AG04449 (cell line): ENCODE measurements at regions of chr9 and their contacts with region 1.

Region 1: GRCh38 chr9:126558051-126558665 is 55.6 kb upstream of the LMX1B start:
- DNase-seq: no peak
- H3K4me3 ChIP-seq: no peak overlapping the region
- CTCF ChIP-seq: peak; percentile 92

Region 2: GRCh38 chr9:126228781-126229444 is 329.2 kb before region 1 on chr9:
- CTCF ChIA-PET with region 1: no interaction called
- POLR2A ChIA-PET with region 1: no interaction called
- DNase-seq: no peak
- H3K4me3 ChIP-seq: no peak overlapping the region
- CTCF ChIP-seq: peak; percentile 96

Region 3: DNA sequence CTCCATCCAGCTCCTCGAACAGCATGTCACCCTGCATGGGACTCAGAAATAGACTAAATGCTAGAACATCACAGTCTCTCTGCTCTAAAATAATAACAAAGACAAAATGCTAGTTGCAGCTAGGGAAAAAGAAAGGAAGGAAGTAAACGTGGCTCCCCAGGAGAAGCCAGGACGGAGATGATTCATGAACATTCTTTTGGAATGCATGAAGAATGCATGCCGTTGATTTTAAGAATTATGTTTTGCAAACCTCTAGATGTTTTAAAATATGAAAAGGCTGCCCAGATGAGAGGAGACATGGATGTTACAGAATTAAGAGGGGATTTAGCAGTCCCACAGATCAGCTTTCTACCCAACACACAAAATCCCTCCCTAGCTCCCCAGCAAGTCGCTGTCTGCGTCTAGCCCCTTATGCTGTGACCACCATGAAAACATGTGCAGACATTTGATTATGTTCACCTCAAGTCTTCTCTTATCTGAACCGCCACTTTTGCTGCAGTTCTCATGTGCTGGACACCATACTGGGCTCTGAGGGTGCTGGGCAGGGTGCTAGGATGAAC is 83.9 kb before region 1 on chr9:
- CTCF ChIA-PET with region 1: no interaction called
- POLR2A ChIA-PET with region 1: no interaction called
- DNase-seq: peak; percentile 17
- H3K4me3 ChIP-seq: no peak overlapping the region
- CTCF ChIP-seq: no peak

Region 4: GRCh38 chr9:126506361-126506941 is 51.7 kb before region 1 on chr9:
- CTCF ChIA-PET with region 1: interaction called, 269 read pairs
- POLR2A ChIA-PET with region 1: no interaction called
- DNase-seq: no peak
- H3K4me3 ChIP-seq: no peak overlapping the region
- CTCF ChIP-seq: no peak

Region 5: GRCh38 chr9:126532019-126532462 is 26.1 kb before region 1 on chr9:
- CTCF ChIA-PET with region 1: interaction called, 16 read pairs
- POLR2A ChIA-PET with region 1: no interaction called
- DNase-seq: no peak
- H3K4me3 ChIP-seq: no peak overlapping the region
- CTCF ChIP-seq: no peak

Region 6: DNA sequence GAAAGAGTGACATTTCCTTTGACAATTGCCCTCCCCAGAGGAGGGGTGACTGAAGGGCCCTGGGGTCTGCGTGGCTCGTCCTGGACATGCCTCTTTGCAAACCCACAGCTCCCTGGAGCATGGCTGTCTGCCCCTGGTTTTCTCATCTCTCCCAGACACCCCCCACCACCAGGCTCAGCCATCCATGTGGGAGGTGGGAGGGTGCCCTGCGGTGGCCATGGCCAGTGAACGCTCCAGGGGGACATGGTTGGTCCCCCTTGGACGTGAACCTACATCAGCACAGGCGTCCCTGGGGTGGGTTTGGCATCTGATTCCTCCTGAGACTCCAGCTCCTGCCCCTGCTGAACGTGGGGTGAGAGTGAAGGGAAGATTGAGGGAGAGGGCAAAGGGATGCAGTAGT is 12.1 kb before region 1 on chr9:
- CTCF ChIA-PET with region 1: interaction called, 14 read pairs
- POLR2A ChIA-PET with region 1: no interaction called
- DNase-seq: no peak
- H3K4me3 ChIP-seq: no peak overlapping the region
- CTCF ChIP-seq: no peak

Region 7: DNA sequence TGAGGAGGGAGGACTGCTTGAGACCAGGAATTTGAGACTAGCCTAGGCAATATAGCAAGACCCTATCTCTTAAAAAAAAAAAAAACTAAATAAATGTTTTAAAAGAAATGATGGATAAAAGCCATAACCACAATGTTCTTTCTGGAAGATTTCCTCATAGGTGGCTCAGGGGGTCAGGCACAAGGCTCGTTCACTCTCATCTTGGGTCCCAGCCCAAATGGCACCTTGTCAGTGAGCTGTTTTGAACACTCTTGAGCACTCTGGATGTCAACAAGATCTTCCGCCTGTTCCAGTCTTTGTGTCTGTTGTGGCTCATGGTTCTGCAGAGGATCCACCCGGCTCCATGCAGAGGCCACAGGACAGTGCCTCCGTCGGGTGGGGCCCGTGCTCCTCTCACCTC is 19.9 kb after region 1 on chr9:
- CTCF ChIA-PET with region 1: interaction called, 11 read pairs
- POLR2A ChIA-PET with region 1: no interaction called
- DNase-seq: no peak
- H3K4me3 ChIP-seq: no peak overlapping the region
- CTCF ChIP-seq: no peak